PC-3 (cell line): ENCODE measurements at regions of chr5 and their contacts with region 1.

Region 1: DNA sequence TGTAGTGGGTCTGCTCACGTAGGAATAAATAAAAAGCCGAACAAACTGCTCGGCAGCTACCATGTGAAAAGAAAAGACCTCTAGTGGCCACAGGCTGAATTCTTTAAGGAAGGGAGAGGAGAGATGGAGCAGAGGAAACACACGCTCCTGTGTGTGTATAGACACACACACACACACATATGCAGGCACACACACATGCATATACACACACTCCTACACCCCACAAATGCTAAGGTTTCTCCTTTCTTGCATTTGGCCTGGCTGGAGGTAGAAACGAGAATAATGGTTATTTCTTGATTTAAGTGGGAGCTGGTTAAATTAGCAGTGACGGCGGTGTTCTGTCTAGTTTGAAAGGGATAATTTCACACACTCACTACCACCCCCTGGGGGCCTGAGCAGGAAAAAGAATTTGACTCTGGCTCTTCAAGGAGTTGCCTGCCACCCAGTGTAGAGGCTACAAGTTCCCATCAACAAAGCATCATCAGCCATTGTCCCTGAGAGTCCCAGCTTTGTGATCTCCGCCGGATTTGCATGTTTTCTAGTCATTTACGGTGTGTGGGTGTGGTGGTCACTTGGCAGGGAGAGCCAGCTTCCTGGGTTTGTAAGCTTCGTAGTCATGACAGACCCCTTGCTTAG is at the start of gene INSYN2B:
- DNase-seq: peak; percentile 88
- ATAC-seq: peak; percentile 66
- H3K4me3 ChIP-seq: peak within 1 kb of the TSS; percentile 78
- H3K27ac ChIP-seq: peak within 1 kb of the TSS; percentile 25
- H3K4me1 ChIP-seq: peaks cover 51% of the 10 kb centered on the region
- H3K27me3 ChIP-seq: no peaks in the 10 kb centered on the region
- CTCF ChIP-seq: peak; percentile 84
- total RNA-seq, gene INSYN2B: 1.1 and 1.5 TPM in 2 replicates

Region 2: GRCh38 chr5:169408731-169409130 is 571.8 kb before region 1 on chr5:
- CTCF ChIA-PET with region 1: no interaction called
- POLR2A ChIA-PET with region 1: no interaction called
- intact Hi-C with region 1: no loop called
- DNase-seq: no peak
- ATAC-seq: no peak
- H3K4me3 ChIP-seq: no peak overlapping the region
- H3K27ac ChIP-seq: no peak overlapping the region
- H3K4me1 ChIP-seq: no peaks in the 10 kb centered on the region
- H3K27me3 ChIP-seq: peaks cover 9% of the 10 kb centered on the region; the same call in 1 of the 2 replicates
- CTCF ChIP-seq: no peak

Region 3: GRCh38 chr5:169695919-169696490 is 284.5 kb before region 1 on chr5:
- CTCF ChIA-PET with region 1: no interaction called
- POLR2A ChIA-PET with region 1: no interaction called
- intact Hi-C with region 1: loop called (anchors 1 kb)
- DNase-seq: peak; percentile 96
- ATAC-seq: peak; percentile 87
- H3K4me3 ChIP-seq: peak overlapping the region; percentile 32; the same call in 1 of the 2 replicates
- H3K27ac ChIP-seq: peak overlapping the region; percentile 82
- H3K4me1 ChIP-seq: peaks cover 28% of the 10 kb centered on the region
- H3K27me3 ChIP-seq: no peaks in the 10 kb centered on the region
- CTCF ChIP-seq: no peak

Region 4: DNA sequence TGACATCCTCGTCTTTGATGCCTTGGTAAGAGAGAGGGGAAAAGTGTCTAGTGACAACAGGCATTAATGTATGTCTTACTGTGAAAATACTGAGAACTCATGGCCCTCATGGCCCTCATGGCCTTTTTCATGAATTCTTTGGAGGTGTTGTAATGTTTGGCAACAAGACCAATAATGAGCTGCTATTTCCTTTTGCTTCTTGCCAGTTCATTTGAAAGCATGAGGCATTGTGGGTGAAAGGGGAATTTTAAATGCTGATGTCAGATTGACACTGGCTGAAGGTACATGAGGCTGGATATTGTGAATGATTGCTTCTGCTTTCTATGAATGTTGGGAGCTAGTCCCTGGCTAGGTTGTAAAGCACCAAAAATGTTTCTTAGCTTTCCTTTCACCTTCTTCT is 264.3 kb before region 1 on chr5:
- CTCF ChIA-PET with region 1: no interaction called
- POLR2A ChIA-PET with region 1: no interaction called
- intact Hi-C with region 1: loop called (anchors 5 kb)
- DNase-seq: peak; percentile 52
- ATAC-seq: no peak
- H3K4me3 ChIP-seq: no peak overlapping the region
- H3K27ac ChIP-seq: peak overlapping the region; percentile 75; the same call in 1 of the 2 replicates
- H3K4me1 ChIP-seq: peaks cover 24% of the 10 kb centered on the region
- H3K27me3 ChIP-seq: no peaks in the 10 kb centered on the region
- CTCF ChIP-seq: no peak

Region 5: DNA sequence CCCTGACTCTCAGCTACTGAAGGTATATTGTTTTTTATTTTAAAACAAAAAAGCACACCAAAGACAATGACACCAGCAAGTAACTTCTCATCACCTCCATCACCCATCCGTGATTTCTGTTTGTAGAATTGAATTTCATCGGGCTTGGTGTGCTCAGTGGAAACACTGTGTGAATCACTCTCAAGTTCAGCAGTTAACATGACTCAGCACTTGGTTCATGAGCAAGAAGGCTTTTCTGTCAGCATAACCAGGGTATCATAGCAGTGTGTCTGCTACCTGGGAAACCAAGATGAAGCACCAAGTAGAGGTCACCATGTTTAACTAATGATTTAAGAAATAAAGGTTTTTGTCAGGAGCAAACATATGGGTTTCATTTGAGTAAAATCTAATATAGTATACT is 124.0 kb before region 1 on chr5:
- CTCF ChIA-PET with region 1: interaction called, 3 read pairs
- POLR2A ChIA-PET with region 1: no interaction called
- intact Hi-C with region 1: loop called (anchors 5 kb)
- DNase-seq: peak; percentile 81
- ATAC-seq: peak; percentile 99
- H3K4me3 ChIP-seq: no peak overlapping the region
- H3K27ac ChIP-seq: no peak overlapping the region
- H3K4me1 ChIP-seq: peaks cover 12% of the 10 kb centered on the region; the same call in 1 of the 2 replicates
- H3K27me3 ChIP-seq: no peaks in the 10 kb centered on the region
- CTCF ChIP-seq: no peak

Region 6: DNA sequence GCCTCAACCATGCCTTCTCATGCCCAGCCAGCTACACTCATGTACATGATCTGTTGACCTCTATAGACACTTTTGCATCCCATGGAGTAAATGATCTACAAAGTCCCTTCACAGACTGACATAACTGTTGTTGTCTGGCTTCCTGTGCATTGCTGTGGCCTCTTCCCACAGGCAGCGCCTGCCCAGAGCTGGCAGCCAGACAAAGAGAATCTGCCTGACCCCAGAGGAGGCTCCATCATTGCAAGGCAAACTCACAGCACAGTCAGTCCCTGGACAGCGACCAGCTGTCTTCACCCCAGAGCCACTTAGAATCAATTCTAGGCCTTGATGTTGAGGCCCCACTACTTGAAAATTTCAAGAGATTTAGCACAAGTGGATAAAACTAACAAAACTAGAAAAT is 65.8 kb before region 1 on chr5:
- CTCF ChIA-PET with region 1: no interaction called
- POLR2A ChIA-PET with region 1: no interaction called
- intact Hi-C with region 1: loop called (anchors 1 kb)
- DNase-seq: no peak
- ATAC-seq: no peak
- H3K4me3 ChIP-seq: no peak overlapping the region
- H3K27ac ChIP-seq: no peak overlapping the region
- H3K4me1 ChIP-seq: peaks cover 4% of the 10 kb centered on the region; the same call in 1 of the 2 replicates
- H3K27me3 ChIP-seq: no peaks in the 10 kb centered on the region
- CTCF ChIP-seq: no peak

Region 7: DNA sequence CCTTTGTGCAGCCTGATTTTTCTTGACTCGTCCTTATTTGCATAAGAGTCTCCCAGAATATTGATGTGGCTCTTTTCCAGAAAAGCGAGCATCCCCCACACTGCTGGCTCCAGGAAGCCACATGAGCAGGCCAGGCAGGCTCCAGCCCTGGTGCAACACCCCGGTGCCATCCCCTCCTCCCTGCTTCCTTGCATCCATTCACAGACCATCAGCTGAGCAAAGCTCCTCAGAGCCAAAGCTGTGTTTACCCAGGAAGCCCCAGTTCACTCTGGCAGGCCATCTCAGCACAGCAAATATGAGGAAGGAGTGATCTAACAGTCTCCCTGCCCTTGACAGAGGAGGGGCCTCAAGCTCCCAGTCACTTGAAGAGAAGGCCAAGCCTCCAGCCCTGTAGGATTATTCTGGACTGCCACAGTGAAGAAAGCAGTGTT is 34.7 kb before region 1 on chr5:
- CTCF ChIA-PET with region 1: interaction called, 4 read pairs
- POLR2A ChIA-PET with region 1: no interaction called
- intact Hi-C with region 1: loop called (anchors 1 kb)
- DNase-seq: peak; percentile 72
- ATAC-seq: peak; percentile 97
- H3K4me3 ChIP-seq: no peak overlapping the region
- H3K27ac ChIP-seq: peak overlapping the region; percentile 61
- H3K4me1 ChIP-seq: peaks cover 20% of the 10 kb centered on the region
- H3K27me3 ChIP-seq: no peaks in the 10 kb centered on the region
- CTCF ChIP-seq: no peak

Region 8: DNA sequence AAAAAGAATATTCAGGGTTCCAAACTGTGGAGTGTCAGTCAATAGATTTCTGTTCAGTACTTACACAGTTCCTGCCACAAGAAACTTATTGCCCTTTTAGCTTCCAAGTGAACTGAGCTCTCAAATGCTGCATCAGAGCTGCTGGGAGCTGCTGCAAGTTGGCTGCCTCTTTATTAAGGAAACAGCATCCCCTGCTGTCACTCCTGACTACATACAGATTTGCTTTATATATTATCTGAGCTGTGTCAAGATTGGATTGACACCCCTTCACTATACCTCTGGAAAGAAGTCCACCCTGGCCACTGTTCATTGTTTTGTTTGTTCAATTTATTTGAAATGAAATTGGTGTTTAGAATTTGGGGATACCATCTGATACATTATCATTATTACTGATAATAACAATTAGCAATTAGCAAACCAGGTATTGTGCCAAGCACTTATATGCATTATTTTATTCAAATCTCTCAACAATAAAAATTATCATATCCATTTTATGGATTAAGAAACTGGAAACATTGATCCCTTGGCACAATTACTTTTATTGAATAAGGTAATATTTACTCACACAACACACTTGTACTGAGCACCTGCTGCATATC is 235.8 kb after region 1 on chr5:
- CTCF ChIA-PET with region 1: interaction called, 6 read pairs
- POLR2A ChIA-PET with region 1: no interaction called
- intact Hi-C with region 1: loop called (anchors 2 kb)
- DNase-seq: peak; percentile 70
- ATAC-seq: peak; percentile 28
- H3K4me3 ChIP-seq: no peak overlapping the region
- H3K27ac ChIP-seq: no peak overlapping the region
- H3K4me1 ChIP-seq: peaks cover 39% of the 10 kb centered on the region
- H3K27me3 ChIP-seq: no peaks in the 10 kb centered on the region
- CTCF ChIP-seq: peak; percentile 80